ENCODE measurements at regions of chr22 and their contacts with region 1.

Region 1: GRCh38 chr22:23938328-23939016 is 22.5 kb downstream of the GSTT2B start:
- DNase-seq: no peak
- H3K4me3 ChIP-seq: no peak overlapping the region
- H3K4me3 Mint-ChIP-seq: no peak overlapping the region
- H3K27ac ChIP-seq: no peak overlapping the region
- H3K27ac Mint-ChIP-seq: no peak overlapping the region
- H3K4me1 ChIP-seq: no peaks in the 10 kb centered on the region
- H3K4me1 Mint-ChIP-seq: no peaks in the 10 kb centered on the region
- H3K27me3 ChIP-seq: no peaks in the 10 kb centered on the region
- H3K27me3 Mint-ChIP-seq: peaks cover 3 to 7% (median 3%) of the 10 kb centered on the region in 3 donors
- CTCF ChIP-seq: no peak

Region 2: DNA sequence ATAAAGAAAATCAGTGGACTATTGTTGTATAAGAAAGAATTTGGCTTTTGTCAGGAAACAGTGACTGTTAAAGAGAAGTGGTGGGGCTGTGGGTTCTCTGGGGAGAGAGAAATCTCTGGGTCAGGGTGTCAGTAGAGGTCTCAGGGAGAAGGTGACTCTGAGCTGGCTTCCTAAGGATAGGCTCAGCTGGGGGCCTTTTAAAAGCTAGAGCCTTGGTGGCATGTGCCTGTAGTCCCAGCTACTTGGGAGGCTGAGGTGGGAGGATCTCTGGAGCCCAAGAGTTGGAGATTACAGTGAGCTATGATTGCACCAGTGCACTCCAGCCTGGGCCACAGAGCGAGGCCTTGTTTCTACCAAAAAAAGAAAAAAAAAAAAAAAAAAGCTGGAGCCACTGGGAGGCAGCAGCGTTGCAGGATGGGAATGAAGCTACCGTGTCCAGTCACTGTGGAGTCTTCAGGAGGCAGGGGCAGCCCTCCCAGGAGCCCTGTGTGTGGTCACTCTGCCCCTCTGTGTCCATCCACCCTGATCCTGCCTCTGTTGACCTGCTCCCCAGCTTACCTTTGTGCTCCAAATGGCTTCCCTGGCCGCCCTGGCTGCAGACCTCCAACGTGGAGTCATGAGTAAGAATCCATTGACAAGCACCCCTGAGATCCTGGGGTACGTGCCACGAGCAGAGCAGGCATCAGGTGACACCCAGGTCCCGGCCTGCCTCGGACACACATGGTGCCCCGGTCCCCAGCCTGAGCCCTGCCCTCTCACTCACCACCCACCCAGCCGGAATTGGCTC is 49.7 kb before region 1 on chr22:
- intact Hi-C with region 1: no loop called
- DNase-seq: no peak
- H3K4me3 ChIP-seq: no peak overlapping the region
- H3K4me3 Mint-ChIP-seq: no peak overlapping the region
- H3K27ac ChIP-seq: no peak overlapping the region
- H3K27ac Mint-ChIP-seq: no peak overlapping the region
- H3K4me1 ChIP-seq: peaks cover 6 to 7% of the 10 kb centered on the region in 2 donors
- H3K4me1 Mint-ChIP-seq: peaks cover 7% of the 10 kb centered on the region
- H3K27me3 ChIP-seq: no peaks in the 10 kb centered on the region
- H3K27me3 Mint-ChIP-seq: peaks cover 3 to 8% (median 4%) of the 10 kb centered on the region in 3 donors
- CTCF ChIP-seq: no peak

Region 3: DNA sequence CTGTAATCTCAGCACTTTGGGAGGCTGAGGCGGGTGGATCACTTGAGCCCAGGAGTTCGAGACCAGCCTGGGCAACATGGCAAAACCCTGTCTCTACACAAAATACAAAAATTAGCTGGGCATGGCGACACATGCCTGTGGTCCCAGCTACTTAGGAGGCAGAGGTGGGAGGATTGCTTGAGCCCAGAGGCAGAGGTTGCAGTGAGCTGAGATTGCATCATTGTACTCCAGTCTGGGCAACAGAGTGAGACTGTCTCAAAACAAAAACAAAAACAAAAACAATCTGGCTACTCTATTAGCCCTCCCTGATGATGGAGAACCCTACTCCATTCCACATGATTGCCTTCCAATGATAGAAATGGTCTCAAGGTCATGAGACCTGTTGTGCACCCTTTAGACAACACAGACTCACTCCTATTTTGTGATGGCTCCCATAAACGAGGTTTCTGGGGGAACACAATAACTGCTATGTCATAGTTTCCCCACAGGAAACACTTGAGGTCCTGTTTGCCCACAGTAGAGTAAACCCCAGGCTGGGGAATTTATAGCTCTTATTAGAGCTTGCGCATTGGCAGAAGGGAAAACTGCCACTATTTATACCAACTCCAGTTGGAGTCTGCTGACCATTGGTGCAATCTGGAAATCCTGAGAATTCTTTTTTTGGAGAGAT is 15.7 kb before region 1 on chr22:
- intact Hi-C with region 1: no loop called
- DNase-seq: no peak
- H3K4me3 ChIP-seq: no peak overlapping the region
- H3K4me3 Mint-ChIP-seq: no peak overlapping the region
- H3K27ac ChIP-seq: no peak overlapping the region
- H3K27ac Mint-ChIP-seq: no peak overlapping the region
- H3K4me1 ChIP-seq: peaks cover 4 to 8% of the 10 kb centered on the region in 2 donors
- H3K4me1 Mint-ChIP-seq: peaks cover 8% of the 10 kb centered on the region
- H3K27me3 ChIP-seq: no peaks in the 10 kb centered on the region
- H3K27me3 Mint-ChIP-seq: peaks cover 2 to 24% (median 20%) of the 10 kb centered on the region in 3 donors
- CTCF ChIP-seq: no peak

Region 4: GRCh38 chr22:24005201-24005600 is 66.7 kb after region 1 on chr22 and contains the start of gene GSTT4:
- intact Hi-C with region 1: loop called in 1 of 2 experiments (anchors 5 kb)
- DNase-seq: no peak
- H3K4me3 ChIP-seq: no peak within 1 kb of the TSS
- H3K4me3 Mint-ChIP-seq: no peak within 1 kb of the TSS
- H3K27ac ChIP-seq: no peak within 1 kb of the TSS
- H3K27ac Mint-ChIP-seq: no peak within 1 kb of the TSS
- H3K4me1 ChIP-seq: no peaks in the 10 kb centered on the region
- H3K4me1 Mint-ChIP-seq: no peaks in the 10 kb centered on the region
- H3K27me3 ChIP-seq: no peaks in the 10 kb centered on the region
- H3K27me3 Mint-ChIP-seq: peaks cover 3 to 7% (median 4%) of the 10 kb centered on the region in 3 donors
- CTCF ChIP-seq: no peak
- polyA plus RNA-seq, gene GSTT4: not detected

Measured in CD14-positive monocyte (primary cell).